ENCODE measurements at regions of chr2 and their contacts with region 1.

Region 1: DNA sequence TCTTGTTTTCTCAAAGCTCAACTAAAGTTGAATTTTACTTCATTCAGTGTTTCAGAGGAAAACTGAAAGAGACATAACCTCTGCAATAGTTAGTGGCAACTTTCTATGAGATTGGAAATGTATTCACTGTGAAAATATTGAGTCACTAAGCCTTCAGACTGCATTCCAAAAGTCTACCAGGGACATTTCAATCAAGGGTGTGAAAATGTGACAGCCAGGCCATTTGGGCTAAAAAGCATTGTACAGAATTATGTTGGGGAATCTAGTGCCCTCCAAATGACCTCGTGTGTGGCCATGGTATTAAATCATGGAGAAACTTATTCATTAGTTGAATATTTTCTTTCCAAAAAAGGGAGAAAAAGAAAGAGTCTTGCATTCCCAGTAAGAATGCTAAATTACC is 251.9 kb downstream of the GRB14 start:
- DNase-seq: no peak
- H3K4me3 ChIP-seq: no peak overlapping the region
- H3K27ac ChIP-seq: no peak overlapping the region
- H3K4me1 ChIP-seq: no peaks in the 10 kb centered on the region
- H3K27me3 ChIP-seq: no peaks in the 10 kb centered on the region
- CTCF ChIP-seq: no peak
- POLR2A ChIP-seq: no peak

Region 2: DNA sequence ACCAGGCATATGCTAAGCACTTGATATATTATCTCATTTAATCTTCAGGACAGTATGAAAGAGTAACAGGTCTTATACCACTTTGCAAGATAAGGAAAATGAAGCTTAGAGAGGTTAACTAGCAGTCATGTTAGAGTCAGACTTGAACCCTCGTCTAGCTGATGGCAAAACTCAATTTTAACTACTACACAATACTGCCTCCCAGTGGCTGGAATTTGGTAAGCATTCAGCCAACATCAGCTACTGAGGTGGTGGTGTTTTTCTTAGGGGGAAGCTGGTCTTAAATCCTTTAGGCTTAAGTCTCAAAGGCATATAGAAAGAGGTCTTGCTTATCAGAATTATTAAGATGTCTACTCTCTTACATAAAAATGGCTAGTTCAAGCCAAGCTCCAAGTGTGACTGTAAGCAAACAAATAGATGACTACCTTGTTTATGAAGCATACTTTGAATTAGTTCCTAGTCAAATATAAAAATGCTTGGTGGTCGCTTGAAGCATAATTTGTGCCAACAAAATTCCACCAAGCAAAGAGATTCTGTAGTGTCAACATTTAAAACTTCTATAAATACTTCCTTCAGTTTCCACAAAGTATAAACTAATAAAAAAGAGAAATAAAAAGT is 308.1 kb before region 1 on chr2:
- CTCF ChIA-PET with region 1: no interaction called
- POLR2A ChIA-PET with region 1: no interaction called
- dilution Hi-C with region 1: no loop called
- intact Hi-C with region 1: no loop called
- DNase-seq: peak; percentile 61
- H3K4me3 ChIP-seq: no peak overlapping the region
- H3K27ac ChIP-seq: no peak overlapping the region
- H3K4me1 ChIP-seq: no peaks in the 10 kb centered on the region
- H3K27me3 ChIP-seq: no peaks in the 10 kb centered on the region
- CTCF ChIP-seq: peak; percentile 53 to 58
- POLR2A ChIP-seq: no peak

Region 3: DNA sequence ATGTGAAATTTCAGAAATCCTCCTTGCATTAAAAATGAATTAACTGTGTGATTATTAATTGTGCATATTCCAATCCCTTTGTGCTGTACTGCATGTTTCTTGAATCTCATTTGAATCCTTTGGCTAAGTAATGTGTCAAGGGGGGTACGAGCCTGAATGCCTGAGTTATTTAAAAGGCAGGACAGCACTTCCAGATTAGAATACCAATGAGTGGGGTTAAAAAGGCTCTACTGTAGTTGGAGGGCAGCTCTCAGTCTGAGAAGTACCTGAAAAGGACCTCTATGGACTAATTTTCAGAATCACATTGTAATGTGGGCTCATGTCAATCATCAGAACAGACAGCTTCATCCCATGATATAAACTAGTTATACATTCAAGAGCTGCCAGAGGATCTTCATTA is 171.1 kb before region 1 on chr2:
- CTCF ChIA-PET with region 1: no interaction called
- POLR2A ChIA-PET with region 1: no interaction called
- dilution Hi-C with region 1: no loop called
- intact Hi-C with region 1: no loop called
- DNase-seq: no peak
- H3K4me3 ChIP-seq: no peak overlapping the region
- H3K27ac ChIP-seq: no peak overlapping the region
- H3K4me1 ChIP-seq: no peaks in the 10 kb centered on the region
- H3K27me3 ChIP-seq: no peaks in the 10 kb centered on the region
- CTCF ChIP-seq: no peak
- POLR2A ChIP-seq: no peak

Region 4: GRCh38 chr2:164335947-164336346 is 33.4 kb before region 1 on chr2:
- CTCF ChIA-PET with region 1: no interaction called
- POLR2A ChIA-PET with region 1: no interaction called
- dilution Hi-C with region 1: no loop called
- intact Hi-C with region 1: loop called (anchors 2 kb)
- DNase-seq: no peak
- H3K4me3 ChIP-seq: no peak overlapping the region
- H3K27ac ChIP-seq: no peak overlapping the region
- H3K4me1 ChIP-seq: no peaks in the 10 kb centered on the region
- H3K27me3 ChIP-seq: no peaks in the 10 kb centered on the region
- CTCF ChIP-seq: no peak
- POLR2A ChIP-seq: no peak

Measured in endothelial cell of umbilical vein (primary cell).